ENCODE measurements at regions of chr6 and their contacts with region 1.

Region 1: GRCh38 chr6:28896505-28897368 is 27.0 kb downstream of the TRIM27 start:
- DNase-seq: peak; percentile 55
- ATAC-seq: peak; percentile 18
- H3K4me3 ChIP-seq: peak overlapping the region; percentile 81
- H3K27ac ChIP-seq: peak overlapping the region; percentile 75
- H3K4me1 ChIP-seq: no peaks in the 10 kb centered on the region
- H3K27me3 ChIP-seq: no peaks in the 10 kb centered on the region
- CTCF ChIP-seq: no peak
- POLR2A ChIP-seq: peak; percentile 13
- RAD21 ChIP-seq: no peak

Region 2: GRCh38 chr6:28923318-28924102 is 26.8 kb after region 1 on chr6 and contains the start of gene TRIM27:
- CTCF ChIA-PET with region 1: interaction called, 3 read pairs
- POLR2A ChIA-PET with region 1: no interaction called
- dilution Hi-C with region 1: no loop called
- in situ Hi-C with region 1: no loop called
- intact Hi-C with region 1: loop called (anchors 2 kb)
- DNase-seq: peak; percentile 75
- ATAC-seq: peak; percentile 91
- H3K4me3 ChIP-seq: peak within 1 kb of the TSS; percentile 92
- H3K27ac ChIP-seq: peak within 1 kb of the TSS; percentile 96
- H3K4me1 ChIP-seq: peaks cover 5% of the 10 kb centered on the region
- H3K27me3 ChIP-seq: no peaks in the 10 kb centered on the region
- CTCF ChIP-seq: no peak; the same call in 1 of the 2 replicates
- POLR2A ChIP-seq: peak; percentile 70
- RAD21 ChIP-seq: no peak
- total RNA-seq, gene TRIM27: 48.0 TPM in 2 replicates

Measured in IMR-90 (cell line).